Activated T-helper 1 cell treated with anti-CD3 and anti-CD28 coated beads, Interleukin-12 subunit alpha, Interleukin-12 subunit beta, Interleukin-2, Interleukin-4 antibody, amounts not matched to agents 30 ng/mL and 10 ng/mL and 1 ng/mL, durations not matched to agents 14 hours and 24 hours and 36 hours (primary cell): ENCODE measurements at regions of chr1 and their contacts with region 1.

Region 1: DNA sequence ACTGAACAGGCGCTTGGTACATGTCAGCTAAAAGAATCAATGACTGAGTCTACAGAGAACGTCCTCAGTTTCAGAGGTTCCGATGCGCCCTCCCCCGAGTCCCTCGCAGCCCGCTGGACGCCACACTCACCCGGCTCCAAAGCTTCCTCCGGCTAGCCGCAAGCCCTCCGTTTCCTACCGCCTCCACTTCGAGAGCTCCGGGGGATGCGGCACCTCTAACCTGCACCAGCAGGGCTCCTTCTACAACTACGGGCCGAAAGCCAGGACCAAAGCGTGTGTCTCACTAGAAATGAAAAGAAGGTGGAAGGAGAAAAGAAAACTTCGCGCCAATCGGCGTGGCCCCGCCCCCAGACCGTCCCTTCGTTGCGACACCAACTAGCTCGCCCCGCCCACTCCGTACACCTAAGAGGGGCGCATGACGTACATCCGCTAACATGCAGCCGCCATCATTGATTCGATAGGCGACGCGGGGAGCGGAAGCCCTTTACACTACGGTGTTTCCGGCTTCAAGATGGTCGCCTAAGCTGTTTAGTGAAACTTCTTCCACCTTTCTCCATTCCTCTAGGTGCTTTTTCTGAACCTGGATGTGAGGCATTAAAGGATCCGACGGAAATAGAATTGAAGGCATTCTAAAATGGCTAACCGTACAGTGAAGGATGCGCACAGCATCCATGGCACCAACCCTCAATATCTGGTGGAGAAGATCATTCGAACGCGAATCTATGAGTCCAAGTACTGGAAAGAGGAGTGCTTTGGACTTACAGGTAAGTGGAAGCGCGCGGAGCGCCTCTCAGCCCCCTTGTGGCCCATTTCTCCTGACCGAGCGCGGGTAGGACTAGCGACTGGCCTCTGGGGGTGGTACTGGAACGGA is at the starts of genes ORC1 and PRPF38A:
- DNase-seq: peak; percentile 94
- H3K4me3 Mint-ChIP-seq: peak within 1 kb of the TSS; percentile 100
- H3K27ac Mint-ChIP-seq: peak within 1 kb of the TSS; percentile 100
- H3K4me1 Mint-ChIP-seq: peaks cover 45% of the 10 kb centered on the region
- H3K27me3 Mint-ChIP-seq: no peaks in the 10 kb centered on the region
- total RNA-seq, gene ORC1: 39.6 and 40.3 TPM in 2 replicates
- total RNA-seq, gene PRPF38A: 103 and 105 TPM in 2 replicates

Region 2: GRCh38 chr1:50913954-50914353 is 1490.4 kb before region 1 on chr1:
- intact Hi-C with region 1: no loop called
- DNase-seq: no peak
- H3K4me3 Mint-ChIP-seq: no peak overlapping the region
- H3K27ac Mint-ChIP-seq: no peak overlapping the region
- H3K4me1 Mint-ChIP-seq: no peaks in the 10 kb centered on the region
- H3K27me3 Mint-ChIP-seq: no peaks in the 10 kb centered on the region

Region 3: GRCh38 chr1:52424231-52424636 is 19.9 kb after region 1 on chr1:
- intact Hi-C with region 1: loop called (anchors 1 kb)
- DNase-seq: peak; percentile 21
- H3K4me3 Mint-ChIP-seq: peak overlapping the region; percentile 19
- H3K27ac Mint-ChIP-seq: peak overlapping the region; percentile 82
- H3K4me1 Mint-ChIP-seq: peaks cover 49% of the 10 kb centered on the region
- H3K27me3 Mint-ChIP-seq: no peaks in the 10 kb centered on the region

Region 4: DNA sequence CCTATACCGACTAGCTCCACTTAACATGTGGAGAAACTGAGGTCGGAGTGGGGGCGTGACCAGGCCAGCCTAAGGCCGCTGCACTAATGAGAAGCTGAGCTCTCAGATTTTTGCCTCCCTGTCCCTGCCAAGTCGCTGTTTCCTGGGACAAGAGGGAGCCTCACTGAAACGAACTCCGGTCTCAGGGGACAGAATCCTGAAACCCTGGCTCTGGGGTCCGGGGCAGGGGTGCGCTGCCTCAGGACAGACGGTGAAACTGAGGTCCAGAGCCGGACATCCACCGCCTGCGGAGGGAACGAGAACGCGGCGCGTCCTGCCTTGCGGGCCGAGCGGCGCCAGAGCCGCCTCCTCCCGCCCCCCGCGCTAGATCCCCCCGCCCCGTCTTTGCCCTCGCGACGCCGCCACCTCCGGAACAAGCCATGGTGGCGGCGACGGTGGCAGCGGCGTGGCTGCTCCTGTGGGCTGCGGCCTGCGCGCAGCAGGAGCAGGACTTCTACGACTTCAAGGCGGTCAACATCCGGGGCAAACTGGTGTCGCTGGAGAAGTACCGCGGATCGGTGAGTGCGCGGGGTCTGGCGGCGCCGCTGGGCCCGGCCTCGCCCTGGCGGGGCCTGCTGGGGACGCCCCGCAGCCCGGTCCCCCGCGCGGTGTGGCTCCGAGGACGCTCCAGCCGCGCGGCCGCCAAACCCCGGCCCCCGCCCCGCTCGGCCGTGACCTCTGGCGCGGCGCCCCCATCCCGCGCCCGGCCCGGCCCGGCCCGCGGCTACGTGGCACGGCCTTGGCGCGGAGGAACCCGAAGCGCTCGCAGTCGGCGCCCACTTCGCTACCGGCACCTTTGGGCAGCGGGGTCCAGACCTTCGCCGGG is 197.9 kb after region 1 on chr1 and contains the start of gene GPX7:
- intact Hi-C with region 1: loop called (anchors 1 kb)
- DNase-seq: peak; percentile 54
- H3K4me3 Mint-ChIP-seq: peak within 1 kb of the TSS; percentile 87
- H3K27ac Mint-ChIP-seq: peak within 1 kb of the TSS; percentile 86
- H3K4me1 Mint-ChIP-seq: peaks cover 49% of the 10 kb centered on the region
- H3K27me3 Mint-ChIP-seq: no peaks in the 10 kb centered on the region
- total RNA-seq, gene GPX7: 32.7 and 32.8 TPM in 2 replicates

Region 5: GRCh38 chr1:52683367-52683940 is 279.1 kb after region 1 on chr1:
- intact Hi-C with region 1: loop called (anchors 1 kb)
- DNase-seq: no peak
- H3K4me3 Mint-ChIP-seq: no peak overlapping the region
- H3K27ac Mint-ChIP-seq: no peak overlapping the region
- H3K4me1 Mint-ChIP-seq: peaks cover 26% of the 10 kb centered on the region
- H3K27me3 Mint-ChIP-seq: no peaks in the 10 kb centered on the region

Region 6: GRCh38 chr1:52702886-52703787 is 298.8 kb after region 1 on chr1:
- intact Hi-C with region 1: loop called (anchors 1 kb)
- DNase-seq: peak; percentile 80
- H3K4me3 Mint-ChIP-seq: peak overlapping the region; percentile 82
- H3K27ac Mint-ChIP-seq: peak overlapping the region; percentile 88
- H3K4me1 Mint-ChIP-seq: peaks cover 32% of the 10 kb centered on the region
- H3K27me3 Mint-ChIP-seq: peaks cover 4% of the 10 kb centered on the region

Region 7: DNA sequence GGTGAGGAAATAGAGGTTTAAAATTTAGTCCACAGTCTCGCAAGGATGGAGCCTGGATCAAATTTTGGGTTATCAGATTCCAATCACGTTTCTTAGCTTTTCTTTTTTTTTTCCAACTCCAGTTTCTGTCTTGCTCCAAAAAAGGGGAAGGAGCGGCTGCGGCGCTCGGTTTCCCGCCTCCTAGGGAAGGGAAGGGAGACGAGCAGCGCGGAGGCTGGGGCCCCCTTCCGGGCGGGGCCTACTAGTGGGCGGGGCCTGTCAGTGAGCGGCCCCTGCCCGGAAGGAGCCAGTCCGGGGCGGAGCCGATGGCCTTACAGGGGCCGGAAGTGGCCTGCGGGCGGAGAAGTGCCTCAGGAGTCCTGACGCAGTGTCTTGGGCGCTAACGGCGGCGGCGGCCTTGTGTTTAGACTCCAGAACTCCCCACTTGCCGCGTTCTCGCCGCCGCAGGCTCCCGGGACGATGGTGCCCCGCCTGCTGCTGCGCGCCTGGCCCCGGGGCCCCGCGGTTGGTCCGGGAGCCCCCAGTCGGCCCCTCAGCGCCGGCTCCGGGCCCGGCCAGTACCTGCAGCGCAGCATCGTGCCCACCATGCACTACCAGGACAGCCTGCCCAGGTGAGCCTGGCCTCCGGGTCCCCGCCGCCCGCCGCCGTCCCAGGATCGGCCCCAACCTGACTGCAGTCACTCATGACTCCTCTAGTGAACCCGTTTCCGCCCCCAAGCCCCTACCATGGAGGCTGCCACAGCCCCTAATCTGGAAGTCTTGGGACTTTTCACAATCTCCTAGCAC is 792.3 kb after region 1 on chr1 and contains the start of gene CPT2:
- intact Hi-C with region 1: loop called (anchors 5 kb)
- DNase-seq: peak; percentile 92
- H3K4me3 Mint-ChIP-seq: peak within 1 kb of the TSS; percentile 95
- H3K27ac Mint-ChIP-seq: peak within 1 kb of the TSS; percentile 92
- H3K4me1 Mint-ChIP-seq: peaks cover 28% of the 10 kb centered on the region
- H3K27me3 Mint-ChIP-seq: no peaks in the 10 kb centered on the region
- total RNA-seq, gene CPT2: 18.5 and 19.4 TPM in 2 replicates